ENCODE measurements at regions of chr15 and their contacts with region 1.

Region 1: GRCh38 chr15:40108855-40109735 is at the start of gene BMF:
- DNase-seq: peak; percentile 98
- H3K4me3 Mint-ChIP-seq: peak within 1 kb of the TSS; percentile 89
- H3K27ac Mint-ChIP-seq: peak within 1 kb of the TSS; percentile 46
- H3K4me1 Mint-ChIP-seq: peaks cover 37% of the 10 kb centered on the region
- H3K27me3 Mint-ChIP-seq: no peaks in the 10 kb centered on the region
- CTCF ChIP-seq: peak; percentile 23
- total RNA-seq, gene BMF: 0.17 TPM in 1 of 2 replicates, not detected in the other

Region 2: DNA sequence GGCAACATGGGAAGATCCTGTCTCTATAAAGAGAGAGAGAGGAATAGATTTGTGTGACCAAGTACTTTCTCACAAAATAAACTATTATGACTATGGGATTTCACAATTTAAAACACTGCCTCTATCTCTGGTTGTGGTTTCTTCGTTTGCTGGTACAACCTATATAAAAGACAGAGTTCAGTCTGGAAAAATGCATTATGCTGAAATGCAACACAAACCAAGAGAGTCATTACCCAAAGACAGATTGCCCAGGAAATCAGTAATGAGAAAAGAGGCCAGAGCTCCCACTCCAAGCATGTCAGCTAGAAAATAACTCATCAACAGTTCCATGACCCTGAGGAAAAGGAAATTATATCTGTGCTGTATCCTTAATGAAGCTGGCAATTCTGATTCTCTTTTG is 212.2 kb before region 1 on chr15:
- CTCF ChIA-PET with region 1: no interaction called
- POLR2A ChIA-PET with region 1: no interaction called
- intact Hi-C with region 1: no loop called
- DNase-seq: no peak
- H3K4me3 Mint-ChIP-seq: no peak overlapping the region
- H3K27ac Mint-ChIP-seq: no peak overlapping the region
- H3K4me1 Mint-ChIP-seq: no peaks in the 10 kb centered on the region
- H3K27me3 Mint-ChIP-seq: no peaks in the 10 kb centered on the region
- CTCF ChIP-seq: no peak

Region 3: DNA sequence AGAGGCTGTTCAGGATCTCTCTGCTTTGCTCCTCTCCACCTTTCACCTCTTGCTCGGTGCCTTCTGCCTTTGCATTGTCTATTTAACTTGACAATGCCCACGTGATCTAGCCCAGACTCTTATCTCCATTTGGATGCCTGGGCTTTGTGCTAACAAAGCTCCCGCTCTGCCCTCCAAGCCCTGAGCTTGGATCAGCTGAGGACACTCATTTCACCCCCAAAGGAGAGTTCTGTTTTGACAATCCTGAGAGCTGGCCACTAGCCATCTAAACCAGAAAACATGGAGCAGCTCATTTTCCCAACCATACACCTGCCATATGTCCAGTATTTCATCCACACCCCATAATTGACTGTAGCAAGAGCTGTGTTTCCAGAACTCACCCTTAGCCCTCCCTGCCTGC is 201.9 kb before region 1 on chr15:
- CTCF ChIA-PET with region 1: no interaction called
- POLR2A ChIA-PET with region 1: no interaction called
- intact Hi-C with region 1: no loop called
- DNase-seq: no peak
- H3K4me3 Mint-ChIP-seq: no peak overlapping the region
- H3K27ac Mint-ChIP-seq: no peak overlapping the region
- H3K4me1 Mint-ChIP-seq: peaks cover 11% of the 10 kb centered on the region
- H3K27me3 Mint-ChIP-seq: no peaks in the 10 kb centered on the region
- CTCF ChIP-seq: no peak

Region 4: GRCh38 chr15:40028193-40028592 is 80.9 kb before region 1 on chr15:
- CTCF ChIA-PET with region 1: no interaction called
- POLR2A ChIA-PET with region 1: no interaction called
- intact Hi-C with region 1: no loop called
- DNase-seq: no peak
- H3K4me3 Mint-ChIP-seq: no peak overlapping the region
- H3K27ac Mint-ChIP-seq: no peak overlapping the region
- H3K4me1 Mint-ChIP-seq: no peaks in the 10 kb centered on the region
- H3K27me3 Mint-ChIP-seq: no peaks in the 10 kb centered on the region
- CTCF ChIP-seq: no peak

Region 5: GRCh38 chr15:40038638-40039543 is 70.2 kb before region 1 on chr15 and contains the start of gene SRP14:
- CTCF ChIA-PET with region 1: interaction called, 46 read pairs
- POLR2A ChIA-PET with region 1: interaction called, 11 read pairs
- intact Hi-C with region 1: no loop called
- DNase-seq: peak; percentile 93
- H3K4me3 Mint-ChIP-seq: peak within 1 kb of the TSS; percentile 92
- H3K27ac Mint-ChIP-seq: peak within 1 kb of the TSS; percentile 97
- H3K4me1 Mint-ChIP-seq: peaks cover 9% of the 10 kb centered on the region
- H3K27me3 Mint-ChIP-seq: no peaks in the 10 kb centered on the region
- CTCF ChIP-seq: no peak
- total RNA-seq, gene SRP14: 165 and 203 TPM in 2 replicates

Region 6: GRCh38 chr15:40050788-40051470 is 58.2 kb before region 1 on chr15:
- CTCF ChIA-PET with region 1: interaction called, 125 read pairs
- POLR2A ChIA-PET with region 1: interaction called, 16 read pairs
- intact Hi-C with region 1: no loop called
- DNase-seq: no peak
- H3K4me3 Mint-ChIP-seq: no peak overlapping the region
- H3K27ac Mint-ChIP-seq: no peak overlapping the region
- H3K4me1 Mint-ChIP-seq: peaks cover 43% of the 10 kb centered on the region
- H3K27me3 Mint-ChIP-seq: no peaks in the 10 kb centered on the region
- CTCF ChIP-seq: no peak

Region 7: GRCh38 chr15:40069178-40070165 is 39.6 kb before region 1 on chr15:
- CTCF ChIA-PET with region 1: interaction called, 19 read pairs
- POLR2A ChIA-PET with region 1: interaction called, 3 read pairs
- intact Hi-C with region 1: no loop called
- DNase-seq: peak; percentile 97
- H3K4me3 Mint-ChIP-seq: no peak overlapping the region
- H3K27ac Mint-ChIP-seq: no peak overlapping the region
- H3K4me1 Mint-ChIP-seq: no peaks in the 10 kb centered on the region
- H3K27me3 Mint-ChIP-seq: no peaks in the 10 kb centered on the region
- CTCF ChIP-seq: no peak

Region 8: DNA sequence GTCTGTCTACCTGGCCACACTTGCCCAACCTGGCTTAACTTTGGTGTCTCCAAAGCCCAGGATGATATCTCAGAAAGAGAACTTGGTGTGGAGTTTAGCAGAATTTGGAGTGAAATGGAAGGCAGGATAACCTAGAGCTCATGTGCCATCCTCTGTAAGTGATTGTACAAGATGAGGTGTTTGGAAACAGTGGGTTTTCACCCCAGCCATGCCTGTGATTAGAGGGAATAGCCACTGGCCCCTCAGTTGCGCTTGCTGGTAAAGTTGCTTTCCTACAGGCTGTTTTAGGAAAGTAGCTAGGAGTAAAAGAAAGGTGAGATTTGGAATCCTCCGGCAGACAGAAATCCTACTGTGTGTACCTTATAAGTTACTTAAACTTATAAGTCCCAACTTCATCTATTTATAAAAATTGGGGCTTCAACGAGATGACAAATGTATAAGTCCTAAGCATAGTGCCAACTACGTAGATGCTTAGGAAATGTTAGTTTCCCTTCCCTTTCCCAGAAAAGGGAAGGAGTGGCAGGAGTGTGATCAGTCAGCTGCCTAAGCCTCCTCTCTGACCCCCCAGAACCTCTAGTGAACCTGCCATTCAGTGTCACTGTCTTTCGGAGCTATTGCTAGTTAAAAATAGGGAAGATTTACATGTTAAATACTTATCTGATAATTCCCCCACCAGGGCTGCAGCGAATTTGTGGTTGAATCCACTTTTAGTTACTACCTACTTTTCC is 13.0 kb after region 1 on chr15:
- CTCF ChIA-PET with region 1: interaction called, 11 read pairs
- POLR2A ChIA-PET with region 1: interaction called, 5 read pairs
- intact Hi-C with region 1: no loop called
- DNase-seq: no peak
- H3K4me3 Mint-ChIP-seq: no peak overlapping the region
- H3K27ac Mint-ChIP-seq: no peak overlapping the region
- H3K4me1 Mint-ChIP-seq: no peaks in the 10 kb centered on the region
- H3K27me3 Mint-ChIP-seq: no peaks in the 10 kb centered on the region
- CTCF ChIP-seq: no peak

Region 9: GRCh38 chr15:40190591-40190990 is 81.5 kb after region 1 on chr15:
- CTCF ChIA-PET with region 1: interaction called, 8 read pairs
- POLR2A ChIA-PET with region 1: no interaction called
- intact Hi-C with region 1: loop called (anchors 10 kb)
- DNase-seq: peak; percentile 48
- H3K4me3 Mint-ChIP-seq: no peak overlapping the region
- H3K27ac Mint-ChIP-seq: no peak overlapping the region
- H3K4me1 Mint-ChIP-seq: peaks cover 6% of the 10 kb centered on the region
- H3K27me3 Mint-ChIP-seq: no peaks in the 10 kb centered on the region
- CTCF ChIP-seq: no peak